Right ventricle myocardium superior (tissue), 1 donor: ENCODE measurements at regions of chr1 and their contacts with region 1.

Region 1: GRCh38 chr1:230772457-230773395 is 25.5 kb downstream of the CAPN9 start:
- DNase-seq: peak; percentile 66
- ATAC-seq: peak; percentile 92

Region 2: GRCh38 chr1:230568008-230568407 is 204.7 kb before region 1 on chr1:
- intact Hi-C with region 1: no loop called
- DNase-seq: no peak
- ATAC-seq: peak; percentile 64

Region 3: GRCh38 chr1:230636575-230637148 is 136.1 kb before region 1 on chr1:
- intact Hi-C with region 1: loop called (anchors 5 kb)
- DNase-seq: no peak
- ATAC-seq: no peak

Region 4: GRCh38 chr1:230681599-230681998 is 91.1 kb before region 1 on chr1:
- intact Hi-C with region 1: loop called (anchors 10 kb)
- DNase-seq: no peak
- ATAC-seq: peak; percentile 74